Caco-2 (cell line): ENCODE measurements at regions of chr6 and their contacts with region 1.

Region 1: GRCh38 chr6:28940858-28941680 is 17.3 kb upstream of the TRIM27 start:
- DNase-seq: peak; percentile 79 to 80
- H3K4me3 ChIP-seq: peak overlapping the region; percentile 47
- H3K4me3 Mint-ChIP-seq: peak overlapping the region; percentile 96
- H3K27ac Mint-ChIP-seq: peak overlapping the region; percentile 93
- H3K4me1 ChIP-seq: peaks cover 7% of the 10 kb centered on the region; the same call in 1 of the 2 replicates
- H3K4me1 Mint-ChIP-seq: peaks cover 39% of the 10 kb centered on the region
- H3K27me3 ChIP-seq: no peaks in the 10 kb centered on the region
- H3K27me3 Mint-ChIP-seq: no peaks in the 10 kb centered on the region
- CTCF ChIP-seq: no peak

Region 2: DNA sequence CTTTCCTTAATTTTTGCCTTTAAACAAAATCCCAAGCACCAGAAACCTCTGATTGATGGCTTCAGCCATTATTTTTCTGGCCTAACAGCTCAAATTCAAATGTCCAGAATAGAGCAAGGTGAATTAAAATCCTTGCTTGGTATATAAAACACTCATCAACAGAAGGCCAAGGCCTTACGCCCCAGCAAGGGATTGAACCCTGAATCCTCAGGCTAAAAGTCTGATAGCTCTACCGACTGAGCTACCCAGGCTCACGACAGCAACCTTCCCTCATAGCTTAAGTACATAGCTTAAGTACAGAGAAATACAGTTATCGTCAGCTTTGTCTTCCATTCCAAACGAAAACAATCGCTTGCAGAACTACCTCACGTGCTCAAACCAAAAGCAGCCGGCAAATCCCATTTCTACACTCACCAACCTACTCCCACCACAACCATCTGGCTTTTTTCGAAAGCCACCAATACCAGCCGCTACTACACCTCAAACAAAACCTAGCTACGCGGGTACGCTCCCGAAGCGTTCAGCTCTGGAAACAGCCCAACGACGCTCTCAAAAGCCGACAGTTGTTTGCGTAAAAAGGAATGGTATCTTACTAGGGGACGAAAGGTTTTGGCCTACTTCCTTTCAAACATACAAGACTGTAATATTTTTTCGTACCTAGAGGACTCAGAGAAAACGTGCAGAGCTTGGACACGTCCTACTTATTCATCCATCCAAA is 247.9 kb before region 1 on chr6:
- CTCF ChIA-PET with region 1: no interaction called
- POLR2A ChIA-PET with region 1: no interaction called
- intact Hi-C with region 1: no loop called
- DNase-seq: no peak
- H3K4me3 ChIP-seq: no peak overlapping the region
- H3K4me3 Mint-ChIP-seq: peak overlapping the region; percentile 9
- H3K27ac Mint-ChIP-seq: peak overlapping the region; percentile 75
- H3K4me1 ChIP-seq: peaks cover 59% of the 10 kb centered on the region
- H3K4me1 Mint-ChIP-seq: peaks cover 46% of the 10 kb centered on the region
- H3K27me3 ChIP-seq: no peaks in the 10 kb centered on the region
- H3K27me3 Mint-ChIP-seq: no peaks in the 10 kb centered on the region
- CTCF ChIP-seq: no peak

Region 3: GRCh38 chr6:28838634-28839442 is 102.2 kb before region 1 on chr6:
- CTCF ChIA-PET with region 1: interaction called, 3 read pairs
- POLR2A ChIA-PET with region 1: no interaction called
- intact Hi-C with region 1: loop called (anchors 1 kb)
- DNase-seq: peak; percentile 85 to 90
- H3K4me3 ChIP-seq: peak overlapping the region; percentile 66
- H3K4me3 Mint-ChIP-seq: peak overlapping the region; percentile 96
- H3K27ac Mint-ChIP-seq: peak overlapping the region; percentile 94
- H3K4me1 ChIP-seq: no peaks in the 10 kb centered on the region; the same call in 1 of the 2 replicates
- H3K4me1 Mint-ChIP-seq: peaks cover 6% of the 10 kb centered on the region
- H3K27me3 ChIP-seq: no peaks in the 10 kb centered on the region
- H3K27me3 Mint-ChIP-seq: peaks cover 3% of the 10 kb centered on the region
- CTCF ChIP-seq: peak; percentile 68 to 75

Region 4: DNA sequence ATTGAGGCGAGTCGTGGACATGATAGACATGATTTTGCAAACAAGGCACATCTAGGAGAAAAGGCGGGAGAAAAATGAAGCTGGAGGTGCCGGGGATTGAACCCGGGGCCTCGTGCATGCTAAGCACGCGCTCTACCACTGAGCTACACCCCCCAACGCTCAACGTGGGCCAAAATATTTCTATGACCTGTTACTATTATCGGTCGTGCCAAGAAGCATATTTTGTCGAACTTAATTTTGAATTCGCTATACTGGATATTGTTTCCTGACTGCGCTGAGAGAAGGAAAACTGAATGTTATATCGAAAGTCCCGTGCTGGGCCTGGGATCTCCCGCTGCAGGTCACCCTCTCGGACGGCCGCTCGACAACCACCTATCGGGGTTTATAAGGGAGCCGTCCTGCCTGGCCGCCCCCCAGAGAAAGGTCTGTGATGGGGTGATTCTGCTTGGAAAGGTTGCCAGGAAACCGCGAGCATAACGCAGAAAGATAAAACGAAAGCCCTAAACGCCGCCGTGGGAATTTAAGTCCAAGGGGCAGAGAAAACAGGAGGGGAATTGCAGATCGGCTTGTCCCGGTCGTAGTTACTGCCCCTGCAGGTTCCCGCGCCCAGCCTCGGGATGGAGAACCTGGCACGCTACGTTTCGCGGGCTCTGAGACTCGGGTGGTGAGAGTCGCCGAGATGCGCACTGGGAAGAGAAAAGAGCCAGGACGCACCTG is 77.3 kb before region 1 on chr6:
- CTCF ChIA-PET with region 1: interaction called, 4 read pairs
- POLR2A ChIA-PET with region 1: no interaction called
- intact Hi-C with region 1: loop called (anchors 2 kb)
- DNase-seq: peak; percentile 85 to 87
- H3K4me3 ChIP-seq: peak overlapping the region; percentile 81
- H3K4me3 Mint-ChIP-seq: peak overlapping the region; percentile 79
- H3K27ac Mint-ChIP-seq: peak overlapping the region; percentile 96
- H3K4me1 ChIP-seq: peaks cover 11% of the 10 kb centered on the region
- H3K4me1 Mint-ChIP-seq: peaks cover 20% of the 10 kb centered on the region
- H3K27me3 ChIP-seq: no peaks in the 10 kb centered on the region
- H3K27me3 Mint-ChIP-seq: no peaks in the 10 kb centered on the region
- CTCF ChIP-seq: no peak

Region 5: DNA sequence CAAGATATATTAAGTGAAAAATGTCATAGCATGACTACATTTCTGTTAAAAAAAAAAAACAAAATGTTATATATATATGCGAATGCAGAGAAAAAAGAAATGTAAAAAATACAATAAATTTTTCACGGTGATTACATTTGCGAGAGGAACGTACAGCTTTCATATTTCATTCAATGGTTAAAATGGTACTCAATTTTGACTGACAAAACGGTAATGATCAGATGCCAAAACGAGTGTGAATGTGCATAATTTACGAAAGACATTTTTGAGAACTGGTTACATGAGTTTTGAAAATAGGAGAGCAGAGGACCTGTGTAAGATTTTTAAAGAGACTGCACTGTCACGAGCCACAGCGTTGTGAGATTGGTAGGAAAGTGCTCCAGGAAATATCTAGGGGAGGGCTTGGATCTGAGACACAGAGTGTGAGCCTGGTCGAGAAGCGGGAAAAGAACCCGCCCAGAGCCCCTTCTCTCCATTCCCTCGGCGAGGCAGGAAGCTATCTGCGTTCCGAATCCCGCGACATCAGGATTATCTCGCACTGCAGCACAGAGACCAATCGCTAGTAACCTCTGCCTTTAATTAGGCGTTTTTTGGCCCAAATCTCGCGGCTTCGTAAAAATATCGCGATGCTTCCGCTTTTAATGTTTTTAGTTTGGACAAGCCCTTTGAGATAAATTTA is 45.8 kb before region 1 on chr6:
- CTCF ChIA-PET with region 1: no interaction called
- POLR2A ChIA-PET with region 1: no interaction called
- intact Hi-C with region 1: loop called (anchors 2 kb)
- DNase-seq: peak; percentile 92 to 96
- H3K4me3 ChIP-seq: peak overlapping the region; percentile 62
- H3K4me3 Mint-ChIP-seq: peak overlapping the region; percentile 95
- H3K27ac Mint-ChIP-seq: peak overlapping the region; percentile 98
- H3K4me1 ChIP-seq: no peaks in the 10 kb centered on the region
- H3K4me1 Mint-ChIP-seq: no peaks in the 10 kb centered on the region
- H3K27me3 ChIP-seq: no peaks in the 10 kb centered on the region
- H3K27me3 Mint-ChIP-seq: no peaks in the 10 kb centered on the region
- CTCF ChIP-seq: no peak

Region 6: GRCh38 chr6:28923318-28924102 is 17.6 kb before region 1 on chr6 and contains the start of gene TRIM27:
- CTCF ChIA-PET with region 1: interaction called, 4 read pairs
- POLR2A ChIA-PET with region 1: interaction called, 11 read pairs
- intact Hi-C with region 1: loop called (anchors 2 kb)
- DNase-seq: peak; percentile 89 to 92
- H3K4me3 ChIP-seq: peak within 1 kb of the TSS; percentile 96
- H3K4me3 Mint-ChIP-seq: peak within 1 kb of the TSS; percentile 94
- H3K27ac Mint-ChIP-seq: peak within 1 kb of the TSS; percentile 89
- H3K4me1 ChIP-seq: peaks cover 6% of the 10 kb centered on the region; the same call in 1 of the 2 replicates
- H3K4me1 Mint-ChIP-seq: peaks cover 7% of the 10 kb centered on the region
- H3K27me3 ChIP-seq: no peaks in the 10 kb centered on the region
- H3K27me3 Mint-ChIP-seq: no peaks in the 10 kb centered on the region
- CTCF ChIP-seq: peak in 1 of 2 experiments; percentile 9
- total RNA-seq, gene TRIM27: 47.6 and 48.7 TPM in 2 replicates

Region 7: GRCh38 chr6:28953039-28953584 is 12.0 kb after region 1 on chr6:
- CTCF ChIA-PET with region 1: no interaction called
- POLR2A ChIA-PET with region 1: no interaction called
- intact Hi-C with region 1: loop called (anchors 1 kb)
- DNase-seq: peak; percentile 65 to 69
- H3K4me3 ChIP-seq: peak overlapping the region; percentile 65
- H3K4me3 Mint-ChIP-seq: peak overlapping the region; percentile 85
- H3K27ac Mint-ChIP-seq: peak overlapping the region; percentile 84
- H3K4me1 ChIP-seq: peaks cover 18% of the 10 kb centered on the region
- H3K4me1 Mint-ChIP-seq: peaks cover 16% of the 10 kb centered on the region
- H3K27me3 ChIP-seq: no peaks in the 10 kb centered on the region
- H3K27me3 Mint-ChIP-seq: peaks cover 3% of the 10 kb centered on the region
- CTCF ChIP-seq: no peak

Region 8: DNA sequence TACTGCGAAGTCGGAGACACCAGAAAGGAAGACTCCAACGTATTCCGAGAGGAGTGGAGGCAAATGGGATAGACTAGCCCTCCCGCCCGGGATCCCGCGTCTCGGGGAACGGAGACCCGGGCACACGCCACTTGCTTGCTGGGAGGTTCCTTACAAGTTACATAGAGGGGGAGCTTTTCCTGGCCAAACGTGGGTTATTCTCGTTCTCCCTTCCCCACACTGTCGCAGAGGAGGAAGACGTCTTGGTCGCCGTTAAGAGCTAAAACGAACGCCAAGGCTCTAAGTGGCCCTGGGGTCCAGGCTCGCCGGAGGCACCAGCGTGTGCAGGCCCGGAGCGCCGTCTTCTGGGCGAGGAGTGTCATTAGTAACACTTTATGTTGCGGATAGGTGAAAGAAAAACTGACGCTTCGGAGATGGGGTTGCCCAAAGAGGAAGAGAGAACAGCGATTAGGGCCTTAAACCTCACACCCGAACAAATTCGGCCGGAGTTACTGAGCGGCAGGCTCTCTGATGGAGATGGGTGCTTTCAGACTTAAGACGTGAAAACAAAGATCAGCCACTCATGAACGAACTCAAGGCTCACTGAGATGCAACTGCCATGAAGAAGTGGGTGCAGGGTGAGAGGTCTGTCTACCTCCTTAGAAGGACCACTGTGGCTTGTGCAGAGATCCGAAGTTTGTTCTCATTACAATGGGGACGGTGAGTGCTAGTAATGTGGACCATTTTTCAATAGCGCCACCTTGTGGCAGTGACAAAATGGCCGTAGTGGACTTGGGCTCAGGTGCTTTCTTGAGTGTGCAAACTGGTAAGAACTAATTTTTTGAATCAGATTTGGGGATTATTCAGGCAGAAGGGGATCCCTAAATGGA is 75.7 kb after region 1 on chr6:
- CTCF ChIA-PET with region 1: no interaction called
- POLR2A ChIA-PET with region 1: no interaction called
- intact Hi-C with region 1: loop called (anchors 1 kb)
- DNase-seq: peak; percentile 80 to 82
- H3K4me3 ChIP-seq: peak overlapping the region; percentile 53
- H3K4me3 Mint-ChIP-seq: peak overlapping the region; percentile 96
- H3K27ac Mint-ChIP-seq: peak overlapping the region; percentile 41
- H3K4me1 ChIP-seq: peaks cover 3% of the 10 kb centered on the region; the same call in 1 of the 2 replicates
- H3K4me1 Mint-ChIP-seq: peaks cover 6% of the 10 kb centered on the region
- H3K27me3 ChIP-seq: no peaks in the 10 kb centered on the region
- H3K27me3 Mint-ChIP-seq: peaks cover 5% of the 10 kb centered on the region
- CTCF ChIP-seq: peak; percentile 66 to 81